GM10248 (cell line): ENCODE measurements at regions of chr1 and their contacts with region 1.

Region 1: GRCh38 chr1:46539972-46540371 is 11.5 kb downstream of the KNCN start:
- DNase-seq: no peak
- CTCF ChIP-seq: no peak

Region 2: GRCh38 chr1:46527474-46528296 is 12.3 kb before region 1 on chr1:
- CTCF ChIA-PET with region 1: interaction called, 67 read pairs
- POLR2A ChIA-PET with region 1: no interaction called
- DNase-seq: peak; percentile 87
- CTCF ChIP-seq: peak; percentile 97

Region 3: DNA sequence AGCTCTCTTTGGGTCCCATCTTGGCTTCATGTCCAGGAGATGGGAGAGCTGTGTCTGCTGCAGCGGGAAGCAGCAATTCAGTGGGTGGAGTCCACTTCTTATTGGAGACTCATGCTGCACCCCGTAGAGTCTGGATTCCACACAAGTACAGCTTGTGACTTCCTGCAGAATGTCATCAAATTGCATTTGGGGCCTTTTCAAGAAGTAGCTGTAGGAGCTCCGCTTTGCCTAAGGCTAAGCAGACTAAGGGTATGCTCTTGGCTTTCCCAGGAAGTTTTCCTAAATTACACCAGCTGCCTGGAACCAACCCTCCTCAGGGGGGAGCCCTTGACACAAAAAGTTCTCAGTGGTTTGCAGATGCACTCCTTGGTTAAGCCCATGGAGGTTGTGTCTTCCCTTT is 82.4 kb after region 1 on chr1:
- CTCF ChIA-PET with region 1: no interaction called
- POLR2A ChIA-PET with region 1: no interaction called
- DNase-seq: no peak
- CTCF ChIP-seq: peak; percentile 32